PC-3 (cell line): ENCODE measurements at regions of chr3 and their contacts with region 1.

Region 1: GRCh38 chr3:9946112-9947024 is 5.8 kb downstream of the PRRT3 start:
- DNase-seq: peak; percentile 96
- ATAC-seq: peak; percentile 76
- H3K4me3 ChIP-seq: peak overlapping the region; percentile 91
- H3K27ac ChIP-seq: peak overlapping the region; percentile 21; the same call in 1 of the 2 replicates
- H3K4me1 ChIP-seq: peaks cover 33% of the 10 kb centered on the region
- H3K27me3 ChIP-seq: no peaks in the 10 kb centered on the region
- CTCF ChIP-seq: peak; percentile 71

Region 2: DNA sequence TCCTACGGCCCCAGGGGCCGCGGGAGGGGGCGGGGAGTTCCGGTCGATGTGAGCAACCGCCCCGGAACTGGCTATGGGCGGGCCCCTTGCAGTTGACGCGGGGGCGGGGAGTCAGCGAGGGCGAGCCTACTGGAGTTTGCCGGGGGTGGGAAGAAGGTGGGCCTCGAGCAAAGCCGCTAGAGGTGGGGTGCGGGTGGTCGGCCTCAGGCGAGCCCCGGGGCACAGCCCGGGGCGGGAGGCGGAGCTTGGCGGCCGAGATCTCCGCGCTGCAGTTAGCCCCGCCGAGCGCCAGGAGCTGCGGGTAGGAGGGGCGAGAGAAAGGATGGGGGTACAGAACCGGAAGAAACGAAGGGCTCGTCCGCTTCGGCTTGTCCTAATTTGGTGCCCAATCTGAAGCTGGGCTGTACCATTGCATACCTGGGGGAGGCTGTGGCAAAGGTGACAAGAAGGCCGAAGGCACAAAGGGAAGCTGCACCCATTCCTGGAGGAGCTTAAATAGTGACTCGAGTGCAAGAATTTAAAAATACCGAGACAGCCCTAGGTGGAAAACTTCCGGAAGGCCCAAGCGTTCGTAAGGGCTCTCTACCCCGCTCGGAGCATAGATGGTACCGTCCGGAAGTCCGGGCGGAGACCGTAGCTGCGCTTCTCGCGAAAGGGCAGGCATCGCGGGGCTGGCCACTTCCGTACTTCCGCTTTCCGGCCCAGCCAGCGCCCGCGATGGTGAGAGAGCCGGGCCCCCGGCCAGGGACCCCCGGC is 153.8 kb before region 1 on chr3 and contains the starts of genes ARPC4 and TADA3:
- CTCF ChIA-PET with region 1: no interaction called
- POLR2A ChIA-PET with region 1: no interaction called
- intact Hi-C with region 1: no loop called
- DNase-seq: peak; percentile 90
- ATAC-seq: peak; percentile 88
- H3K4me3 ChIP-seq: peak within 1 kb of the TSS; percentile 99
- H3K27ac ChIP-seq: peak within 1 kb of the TSS; percentile 79
- H3K4me1 ChIP-seq: peaks cover 11% of the 10 kb centered on the region
- H3K27me3 ChIP-seq: no peaks in the 10 kb centered on the region
- CTCF ChIP-seq: no peak
- total RNA-seq, gene ARPC4: 131 and 223 TPM in 2 replicates
- total RNA-seq, gene TADA3: 85.4 and 85.9 TPM in 2 replicates

Region 3: GRCh38 chr3:9843715-9844438 is 102.5 kb before region 1 on chr3 and contains the start of gene RPUSD3:
- CTCF ChIA-PET with region 1: interaction called, 5 read pairs
- POLR2A ChIA-PET with region 1: no interaction called
- intact Hi-C with region 1: loop called (anchors 1 kb)
- DNase-seq: peak; percentile 99
- ATAC-seq: peak; percentile 96
- H3K4me3 ChIP-seq: peak within 1 kb of the TSS; percentile 90
- H3K27ac ChIP-seq: peak within 1 kb of the TSS; percentile 62
- H3K4me1 ChIP-seq: peaks cover 19% of the 10 kb centered on the region
- H3K27me3 ChIP-seq: no peaks in the 10 kb centered on the region
- CTCF ChIP-seq: no peak
- total RNA-seq, gene RPUSD3: 54.1 and 76.1 TPM in 2 replicates

Region 4: GRCh38 chr3:9862391-9863057 is 83.8 kb before region 1 on chr3:
- CTCF ChIA-PET with region 1: no interaction called
- POLR2A ChIA-PET with region 1: no interaction called
- intact Hi-C with region 1: no loop called
- DNase-seq: peak; percentile 48
- ATAC-seq: peak; percentile 88
- H3K4me3 ChIP-seq: peak overlapping the region; percentile 50; the same call in 1 of the 2 replicates
- H3K27ac ChIP-seq: no peak overlapping the region
- H3K4me1 ChIP-seq: 0 out of 2 replicates have a peak, but pooled peaks cover 9% of the 10 kb centered on the region
- H3K27me3 ChIP-seq: no peaks in the 10 kb centered on the region
- CTCF ChIP-seq: peak; percentile 48

Region 5: DNA sequence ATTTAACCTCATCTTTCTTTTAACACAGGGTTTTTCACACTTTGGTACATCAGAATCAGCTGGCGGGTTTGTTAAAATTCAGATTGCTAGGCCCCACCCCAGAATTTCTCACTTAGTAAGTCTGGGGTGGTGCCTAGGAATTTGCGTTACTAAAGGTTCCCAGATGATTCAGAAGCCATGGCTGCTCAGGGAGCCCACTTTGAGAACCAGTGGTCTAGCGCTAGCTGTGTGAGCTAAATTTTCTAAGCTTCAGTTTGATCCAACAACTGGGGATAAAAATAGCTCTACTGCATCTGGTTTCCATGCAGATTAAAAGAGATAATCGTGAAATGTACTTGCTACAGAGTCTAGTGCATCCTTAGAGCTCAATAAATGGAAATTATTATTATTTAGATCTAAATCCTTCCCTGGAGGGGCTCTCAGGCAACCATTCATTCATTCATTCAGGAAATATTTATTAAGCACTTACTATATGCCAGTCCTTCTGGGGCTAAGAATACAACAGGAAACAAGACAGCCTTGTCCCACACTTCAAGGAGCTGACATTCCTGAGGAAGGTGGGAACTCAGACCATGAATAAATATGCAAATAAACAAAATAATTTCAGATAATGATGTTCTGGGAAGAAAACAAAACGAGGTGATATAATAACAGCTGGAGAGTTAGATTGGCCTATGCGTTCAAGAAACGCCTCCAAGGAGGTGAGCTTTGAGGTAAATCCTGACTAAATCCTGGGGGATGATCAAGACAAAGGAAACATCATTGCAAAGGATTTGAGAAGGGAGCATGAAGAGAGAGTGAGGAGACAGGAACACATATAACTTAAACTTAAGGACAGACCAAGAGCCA is 62.4 kb before region 1 on chr3:
- CTCF ChIA-PET with region 1: no interaction called
- POLR2A ChIA-PET with region 1: no interaction called
- intact Hi-C with region 1: no loop called
- DNase-seq: no peak
- ATAC-seq: peak; percentile 34
- H3K4me3 ChIP-seq: peak overlapping the region; percentile 31; the same call in 1 of the 2 replicates
- H3K27ac ChIP-seq: peak overlapping the region; percentile 72
- H3K4me1 ChIP-seq: peaks cover 16% of the 10 kb centered on the region
- H3K27me3 ChIP-seq: no peaks in the 10 kb centered on the region
- CTCF ChIP-seq: no peak

Region 6: GRCh38 chr3:9932843-9933560 is 13.4 kb before region 1 on chr3:
- CTCF ChIA-PET with region 1: interaction called, 24 read pairs
- POLR2A ChIA-PET with region 1: interaction called, 5 read pairs
- intact Hi-C with region 1: no loop called
- DNase-seq: peak; percentile 84
- ATAC-seq: peak; percentile 71
- H3K4me3 ChIP-seq: peak overlapping the region; percentile 72
- H3K27ac ChIP-seq: peak overlapping the region; percentile 84
- H3K4me1 ChIP-seq: peaks cover 33% of the 10 kb centered on the region
- H3K27me3 ChIP-seq: no peaks in the 10 kb centered on the region
- CTCF ChIP-seq: peak; percentile 84

Region 7: DNA sequence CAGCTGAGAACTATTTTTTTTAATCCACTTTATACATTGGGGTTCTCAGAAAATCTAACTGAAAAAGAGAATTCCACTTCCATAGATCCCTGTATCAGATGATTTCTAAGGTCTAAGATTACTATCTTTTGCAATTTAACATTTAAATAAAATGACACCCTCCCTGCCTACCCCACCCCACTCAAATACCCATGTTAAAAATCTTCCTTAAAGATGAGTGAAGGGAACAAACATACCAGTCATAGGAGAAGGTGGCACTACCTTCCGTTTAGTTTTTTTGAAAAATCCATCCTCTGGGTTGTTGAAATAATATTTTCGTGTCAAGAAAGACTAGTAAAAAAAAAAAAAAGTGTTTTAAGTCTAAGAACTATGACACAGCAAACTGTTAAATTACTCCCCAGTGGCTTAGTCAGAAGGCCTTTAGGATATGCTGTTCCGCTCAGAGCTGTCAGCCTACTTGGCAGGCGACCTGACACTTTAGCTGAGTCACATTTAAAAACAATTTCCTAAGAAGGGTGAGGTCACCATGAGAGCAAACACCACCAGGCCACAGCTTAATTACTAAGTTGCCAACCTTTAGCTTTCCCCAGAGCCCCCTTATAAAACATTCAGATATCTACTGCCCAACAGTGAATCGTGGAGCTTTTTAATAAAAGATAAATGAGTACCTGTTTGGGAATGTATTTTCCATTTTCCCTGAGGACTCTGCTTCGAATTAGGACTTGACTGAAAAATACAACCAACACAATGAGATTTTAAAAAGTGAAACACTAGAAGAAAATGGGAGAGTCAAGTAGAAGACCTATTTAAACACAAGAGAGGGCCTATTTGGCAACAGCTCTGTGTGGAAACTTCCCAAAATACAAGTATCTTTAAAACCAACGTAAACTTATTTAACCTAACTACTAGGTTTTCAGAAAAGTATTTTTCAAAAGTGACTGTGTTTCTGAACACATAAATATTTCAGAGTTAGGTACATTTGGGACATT is 30.6 kb after region 1 on chr3:
- CTCF ChIA-PET with region 1: interaction called, 5 read pairs
- POLR2A ChIA-PET with region 1: interaction called, 4 read pairs
- intact Hi-C with region 1: loop called (anchors 1 kb)
- DNase-seq: peak; percentile 98
- ATAC-seq: peak; percentile 96
- H3K4me3 ChIP-seq: peak overlapping the region; percentile 36
- H3K27ac ChIP-seq: peak overlapping the region; percentile 93
- H3K4me1 ChIP-seq: peaks cover 20% of the 10 kb centered on the region
- H3K27me3 ChIP-seq: no peaks in the 10 kb centered on the region
- CTCF ChIP-seq: no peak

Region 8: GRCh38 chr3:10192953-10193691 is 246.8 kb after region 1 on chr3:
- CTCF ChIA-PET with region 1: interaction called, 10 read pairs
- POLR2A ChIA-PET with region 1: no interaction called
- intact Hi-C with region 1: no loop called
- DNase-seq: peak; percentile 96
- ATAC-seq: peak; percentile 60
- H3K4me3 ChIP-seq: no peak overlapping the region
- H3K27ac ChIP-seq: peak overlapping the region; percentile 96
- H3K4me1 ChIP-seq: peaks cover 73% of the 10 kb centered on the region
- H3K27me3 ChIP-seq: no peaks in the 10 kb centered on the region
- CTCF ChIP-seq: peak; percentile 85